ENCODE measurements at regions of chr1 and their contacts with region 1.

Region 1: GRCh38 chr1:171485375-171486047 is at the start of gene PRRC2C:
- DNase-seq: peak; percentile 91
- CTCF ChIP-seq: peak; percentile 87

Region 2: DNA sequence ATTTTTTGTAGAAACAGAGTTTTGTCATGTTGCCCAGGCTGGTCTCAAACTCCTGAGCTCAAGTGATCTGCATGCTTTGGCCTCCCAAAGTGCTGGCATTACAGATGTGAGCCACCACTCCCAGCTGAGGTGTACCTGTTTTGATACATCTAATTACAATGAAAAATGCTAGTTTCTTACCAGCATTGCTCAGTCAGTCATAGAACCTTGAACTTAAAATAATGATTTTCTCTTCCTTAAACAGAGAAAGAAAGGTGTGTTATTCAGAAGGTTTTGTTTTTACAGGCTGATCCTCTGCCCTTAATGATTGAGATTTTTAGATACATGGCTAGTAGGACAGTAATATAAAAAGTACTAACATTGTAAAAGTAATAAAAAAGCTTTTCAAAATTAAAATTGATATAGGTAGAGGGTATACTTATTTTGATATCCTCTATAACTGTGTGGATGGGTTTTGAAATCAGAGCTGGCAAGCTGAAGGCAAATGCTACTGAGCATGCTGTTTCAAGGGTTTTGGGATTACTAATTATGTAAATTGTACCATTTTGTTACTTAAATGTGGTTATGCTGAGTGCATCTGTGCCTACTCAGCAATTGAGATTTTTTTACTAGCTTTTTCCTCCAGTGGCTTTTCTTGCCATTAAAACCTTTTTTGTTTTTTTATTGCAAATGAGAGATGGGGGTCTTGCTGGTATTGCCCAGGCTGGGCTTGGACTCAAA is 16.0 kb after region 1 on chr1:
- CTCF ChIA-PET with region 1: interaction called, 31 read pairs
- POLR2A ChIA-PET with region 1: interaction called, 3 read pairs
- DNase-seq: peak; percentile 15
- CTCF ChIP-seq: no peak

Region 3: DNA sequence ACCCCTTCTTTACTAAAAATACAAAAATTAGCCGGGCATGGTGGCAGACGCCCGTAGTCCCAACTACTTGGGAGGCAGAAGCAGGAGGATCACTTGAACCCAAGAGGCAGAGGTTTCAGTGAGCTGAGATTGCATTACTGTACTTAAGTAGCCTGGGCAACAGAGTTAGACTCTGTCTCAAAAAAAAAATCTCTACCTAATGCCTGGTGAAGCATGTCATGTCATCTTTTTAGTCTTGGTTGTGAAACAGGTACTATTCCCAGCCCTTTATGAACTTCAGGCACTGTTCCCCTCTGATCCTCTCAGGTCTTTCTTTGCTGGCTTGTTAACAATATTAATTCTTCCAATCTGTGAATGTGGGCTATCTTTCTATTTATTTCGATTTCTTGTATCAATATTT is 21.9 kb after region 1 on chr1:
- CTCF ChIA-PET with region 1: interaction called, 10 read pairs
- POLR2A ChIA-PET with region 1: no interaction called
- DNase-seq: no peak
- CTCF ChIP-seq: no peak

Region 4: GRCh38 chr1:171515299-171515698 is 29.8 kb after region 1 on chr1:
- CTCF ChIA-PET with region 1: interaction called, 15 read pairs
- POLR2A ChIA-PET with region 1: no interaction called
- DNase-seq: no peak
- CTCF ChIP-seq: no peak

Region 5: DNA sequence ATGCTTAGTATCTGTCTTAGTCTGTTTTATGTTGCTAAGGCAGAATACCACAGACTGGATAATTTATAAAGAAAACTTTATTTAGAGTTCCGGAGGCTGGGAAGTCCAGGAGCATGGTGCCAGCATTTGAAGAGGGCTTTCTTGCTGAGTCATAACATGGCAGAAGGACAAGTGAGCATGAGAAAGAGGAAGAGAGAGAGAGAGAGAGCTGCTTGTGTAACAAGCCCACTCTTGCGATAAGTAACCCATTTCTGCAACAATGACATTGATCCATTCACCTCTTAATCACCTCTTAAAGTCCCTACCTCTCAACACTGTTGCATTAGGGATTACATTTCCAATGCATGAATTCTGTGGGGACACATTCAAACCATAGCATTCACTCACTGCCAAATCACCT is 124.9 kb after region 1 on chr1:
- CTCF ChIA-PET with region 1: no interaction called
- POLR2A ChIA-PET with region 1: no interaction called
- DNase-seq: no peak
- CTCF ChIP-seq: no peak

Region 6: GRCh38 chr1:171715813-171716251 is 230.3 kb after region 1 on chr1:
- CTCF ChIA-PET with region 1: interaction called, 13 read pairs
- POLR2A ChIA-PET with region 1: no interaction called
- DNase-seq: no peak
- CTCF ChIP-seq: peak; percentile 41